Breast epithelium (tissue), 4 donors: ENCODE measurements at regions of chr12 and their contacts with region 1.

Region 1: DNA sequence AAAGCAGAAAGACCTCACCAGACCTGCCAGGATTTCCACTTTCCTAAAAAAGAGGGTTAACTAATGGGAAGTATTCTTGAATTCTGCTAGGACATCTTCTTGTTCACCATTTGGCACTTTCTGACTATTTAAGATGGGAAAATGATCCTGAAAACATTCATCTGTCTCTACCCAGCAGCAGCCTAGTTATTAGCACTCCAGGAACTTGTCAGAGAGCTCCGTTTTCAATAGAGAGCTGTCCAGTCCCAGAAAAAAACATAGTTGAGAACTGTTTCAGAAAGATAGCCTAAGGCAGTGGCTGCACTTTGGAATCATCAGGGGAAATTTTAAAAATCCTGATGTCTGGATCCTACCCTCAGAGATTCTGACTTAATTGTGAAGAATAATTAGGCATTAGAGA is 22.1 kb upstream of the CEP83 start:
- DNase-seq: no peak
- H3K4me3 ChIP-seq: no peak overlapping the region
- H3K27ac ChIP-seq: no peak overlapping the region
- H3K4me1 ChIP-seq: no peaks in the 10 kb centered on the region
- H3K27me3 ChIP-seq: no peaks in the 10 kb centered on the region
- CTCF ChIP-seq: no peak
- POLR2A ChIP-seq: no peak

Region 2: GRCh38 chr12:93060666-93061471 is 1420.9 kb before region 1 on chr12:
- intact Hi-C with region 1: loop called (anchors 10 kb)
- DNase-seq: no peak
- H3K4me3 ChIP-seq: no peak overlapping the region
- H3K27ac ChIP-seq: peak overlapping the region in 1 of 2 donors; percentile 47
- H3K4me1 ChIP-seq: no peaks in the 10 kb centered on the region
- H3K27me3 ChIP-seq: no peaks in the 10 kb centered on the region
- CTCF ChIP-seq: no peak
- POLR2A ChIP-seq: no peak

Region 3: GRCh38 chr12:95147866-95148265 is 666.1 kb after region 1 on chr12:
- intact Hi-C with region 1: no loop called
- DNase-seq: no peak
- H3K4me3 ChIP-seq: no peak overlapping the region
- H3K27ac ChIP-seq: peak overlapping the region in 1 of 2 donors; percentile 65
- H3K4me1 ChIP-seq: peaks cover 0 to 11% of the 10 kb centered on the region in 2 donors
- H3K27me3 ChIP-seq: no peaks in the 10 kb centered on the region
- CTCF ChIP-seq: no peak
- POLR2A ChIP-seq: no peak